Psoas muscle (tissue), 8 donors: ENCODE measurements at regions of chr17 and their contacts with region 1.

Region 1: DNA sequence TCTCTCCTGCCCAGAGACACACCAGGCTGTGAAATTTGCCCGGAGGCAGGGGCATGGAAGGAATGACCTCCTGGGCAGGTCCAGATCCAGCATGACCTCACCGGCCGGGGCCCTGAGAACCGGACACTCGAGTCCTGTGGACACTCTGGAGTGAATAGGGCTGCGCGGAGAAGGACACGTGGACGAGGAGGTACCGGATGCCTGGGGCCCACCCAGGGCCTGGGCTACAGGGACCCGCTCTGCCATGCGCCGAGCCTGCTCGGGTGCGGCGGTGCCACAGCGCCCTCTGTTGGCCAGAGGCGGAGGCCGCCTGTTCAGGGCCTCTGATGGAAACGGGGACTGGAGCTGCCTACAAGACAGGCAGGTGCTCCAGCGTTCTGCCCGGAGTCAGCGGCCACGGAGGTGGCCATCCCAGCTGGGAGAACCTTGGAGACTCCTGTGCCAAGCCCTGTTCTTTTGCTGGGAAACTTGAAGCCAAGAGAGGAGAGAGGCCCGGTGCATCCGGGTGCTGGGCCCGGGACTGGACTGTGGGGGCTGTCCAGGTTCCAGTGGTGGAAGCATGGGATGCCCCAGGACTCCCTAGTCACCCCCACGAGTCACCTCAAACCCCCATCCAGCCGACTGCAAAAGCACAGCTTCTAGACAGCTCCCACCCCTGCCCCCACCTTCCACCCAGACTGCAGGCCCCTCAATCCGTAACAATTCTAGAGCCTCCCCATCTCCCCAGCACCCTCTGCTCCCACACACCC is 19.3 kb upstream of the NXPH3 start:
- DNase-seq: peak; percentile 77 to 89
- ATAC-seq: peak; percentile 87 to 95 (median 91)
- H3K4me3 ChIP-seq: peak overlapping the region; percentile 11
- H3K27ac ChIP-seq: no peak overlapping the region
- H3K4me1 ChIP-seq: no peaks in the 10 kb centered on the region
- H3K27me3 ChIP-seq: no peaks in the 10 kb centered on the region
- CTCF ChIP-seq: peak; percentile 97

Region 2: DNA sequence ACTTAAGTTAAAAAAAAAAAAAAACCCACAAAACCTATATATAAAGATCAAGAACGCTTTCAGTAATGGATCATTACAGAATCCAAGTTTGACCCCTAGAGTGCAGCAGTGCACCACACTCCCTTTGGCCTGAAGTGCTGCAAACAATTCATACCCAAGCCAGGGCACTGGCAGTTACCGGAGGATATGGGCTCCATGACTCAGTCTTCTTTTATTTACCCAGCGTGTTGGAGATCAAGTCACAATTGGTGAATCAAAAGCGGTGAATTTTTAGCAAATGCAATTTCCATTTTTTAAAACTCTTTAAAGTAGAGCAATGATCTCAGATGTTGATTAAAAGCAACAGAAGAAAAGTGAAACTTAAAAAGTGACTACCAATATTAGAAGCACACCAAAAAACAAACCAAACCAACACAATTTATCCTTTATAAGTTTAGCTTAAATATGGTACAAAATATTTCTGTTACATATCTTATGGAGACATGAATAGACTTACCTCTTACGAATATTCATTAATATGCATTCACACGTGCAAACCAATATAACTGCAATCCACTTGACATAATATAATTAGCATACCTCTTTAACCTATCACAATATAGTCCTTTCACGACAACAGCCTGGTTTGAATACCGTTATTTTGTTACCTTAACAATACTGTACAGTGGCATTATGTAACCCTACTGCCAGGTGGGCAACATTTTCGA is 240.7 kb before region 1 on chr17:
- intact Hi-C with region 1: loop called (anchors 2 to 10 kb)
- DNase-seq: peak; percentile 63 to 84
- ATAC-seq: peak; percentile 98 to 100 (median 100)
- H3K4me3 ChIP-seq: peak overlapping the region; percentile 37
- H3K27ac ChIP-seq: peak overlapping the region; percentile 1
- H3K4me1 ChIP-seq: peaks cover 9% of the 10 kb centered on the region
- H3K27me3 ChIP-seq: no peaks in the 10 kb centered on the region
- CTCF ChIP-seq: peak; percentile 88

Region 3: GRCh38 chr17:49407981-49408501 is 148.4 kb before region 1 on chr17:
- intact Hi-C with region 1: loop called in 1 of 2 experiments (anchors 2 kb)
- DNase-seq: peak; percentile 56 to 78
- ATAC-seq: peak; percentile 54 to 71 (median 62)
- H3K4me3 ChIP-seq: no peak overlapping the region
- H3K27ac ChIP-seq: no peak overlapping the region
- H3K4me1 ChIP-seq: no peaks in the 10 kb centered on the region
- H3K27me3 ChIP-seq: no peaks in the 10 kb centered on the region
- CTCF ChIP-seq: peak; percentile 47

Region 4: GRCh38 chr17:49434821-49435670 is 121.4 kb before region 1 on chr17:
- intact Hi-C with region 1: loop called (anchors 2 kb)
- DNase-seq: no peak
- ATAC-seq: peak; percentile 54 to 84 (median 80)
- H3K4me3 ChIP-seq: no peak overlapping the region
- H3K27ac ChIP-seq: no peak overlapping the region
- H3K4me1 ChIP-seq: no peaks in the 10 kb centered on the region
- H3K27me3 ChIP-seq: peaks cover 0 to 13% (median 5%) of the 10 kb centered on the region in 3 donors
- CTCF ChIP-seq: peak; percentile 72

Region 5: GRCh38 chr17:49496183-49496866 is 60.1 kb before region 1 on chr17:
- intact Hi-C with region 1: loop called (anchors 2 kb)
- DNase-seq: peak; percentile 82 to 90
- ATAC-seq: peak; percentile 85 to 92 (median 86)
- H3K4me3 ChIP-seq: peak overlapping the region; percentile 71
- H3K27ac ChIP-seq: no peak overlapping the region
- H3K4me1 ChIP-seq: peaks cover 26% of the 10 kb centered on the region
- H3K27me3 ChIP-seq: peaks cover 0 to 67% (median 7%) of the 10 kb centered on the region in 3 donors
- CTCF ChIP-seq: peak; percentile 86